ENCODE measurements at regions of chr3 and their contacts with region 1.

Region 1: DNA sequence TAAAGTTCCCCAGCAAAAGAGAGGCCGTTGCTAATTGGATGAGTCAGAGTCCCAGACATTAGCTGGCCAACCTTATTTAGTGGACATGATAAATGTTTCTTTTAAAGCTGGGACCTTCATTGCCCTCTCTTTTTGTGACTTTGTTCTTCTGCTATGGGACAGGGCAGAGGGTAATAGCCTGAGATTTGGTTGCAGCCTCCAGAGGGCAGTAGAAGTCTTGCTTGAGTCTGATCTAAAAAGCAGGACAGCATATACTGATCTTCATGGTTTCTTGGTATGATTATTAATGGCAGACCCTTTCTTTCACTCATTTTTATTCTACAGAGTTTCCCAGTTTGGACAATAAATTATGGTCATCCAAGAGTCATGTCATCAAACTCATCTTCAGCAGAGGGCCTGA is 25.1 kb upstream of the ZKSCAN7 start:
- DNase-seq: peak in 5 of 14 experiments; percentile 6 to 27 (median 19)
- ATAC-seq: no peak
- H3K4me3 ChIP-seq: no peak overlapping the region
- H3K4me3 Mint-ChIP-seq: no peak overlapping the region
- H3K27ac ChIP-seq: no peak overlapping the region
- H3K27ac Mint-ChIP-seq: no peak overlapping the region
- H3K4me1 ChIP-seq: no peaks in the 10 kb centered on the region
- H3K4me1 Mint-ChIP-seq: no peaks in the 10 kb centered on the region
- H3K27me3 ChIP-seq: peaks cover 4 to 10% of the 10 kb centered on the region in 2 experiments
- H3K27me3 Mint-ChIP-seq: peaks cover 36% of the 10 kb centered on the region
- CTCF ChIP-seq: no peak

Region 2: GRCh38 chr3:44467241-44467640 is 62.7 kb before region 1 on chr3:
- CTCF ChIA-PET with region 1: no interaction called
- POLR2A ChIA-PET with region 1: no interaction called
- intact Hi-C with region 1: no loop called
- DNase-seq: no peak
- ATAC-seq: no peak
- H3K4me3 ChIP-seq: no peak overlapping the region
- H3K4me3 Mint-ChIP-seq: no peak overlapping the region
- H3K27ac ChIP-seq: no peak overlapping the region
- H3K27ac Mint-ChIP-seq: peak overlapping the region; percentile 20
- H3K4me1 ChIP-seq: no peaks in the 10 kb centered on the region
- H3K4me1 Mint-ChIP-seq: peaks cover 26% of the 10 kb centered on the region
- H3K27me3 ChIP-seq: no peaks in the 10 kb centered on the region
- H3K27me3 Mint-ChIP-seq: no peaks in the 10 kb centered on the region
- CTCF ChIP-seq: no peak

Region 3: GRCh38 chr3:44913868-44914468 is 384.0 kb after region 1 on chr3:
- CTCF ChIA-PET with region 1: interaction called, 14 read pairs
- POLR2A ChIA-PET with region 1: no interaction called
- intact Hi-C with region 1: loop called (anchors 1 kb)
- DNase-seq: peak; percentile 46 to 80 (median 58)
- ATAC-seq: peak; percentile 64
- H3K4me3 ChIP-seq: no peak overlapping the region
- H3K4me3 Mint-ChIP-seq: no peak overlapping the region
- H3K27ac ChIP-seq: no peak overlapping the region
- H3K27ac Mint-ChIP-seq: no peak overlapping the region
- H3K4me1 ChIP-seq: no peaks in the 10 kb centered on the region
- H3K4me1 Mint-ChIP-seq: no peaks in the 10 kb centered on the region
- H3K27me3 ChIP-seq: peaks cover 8 to 11% of the 10 kb centered on the region in 2 experiments
- H3K27me3 Mint-ChIP-seq: peaks cover 23% of the 10 kb centered on the region
- CTCF ChIP-seq: peak; percentile 76

Region 4: DNA sequence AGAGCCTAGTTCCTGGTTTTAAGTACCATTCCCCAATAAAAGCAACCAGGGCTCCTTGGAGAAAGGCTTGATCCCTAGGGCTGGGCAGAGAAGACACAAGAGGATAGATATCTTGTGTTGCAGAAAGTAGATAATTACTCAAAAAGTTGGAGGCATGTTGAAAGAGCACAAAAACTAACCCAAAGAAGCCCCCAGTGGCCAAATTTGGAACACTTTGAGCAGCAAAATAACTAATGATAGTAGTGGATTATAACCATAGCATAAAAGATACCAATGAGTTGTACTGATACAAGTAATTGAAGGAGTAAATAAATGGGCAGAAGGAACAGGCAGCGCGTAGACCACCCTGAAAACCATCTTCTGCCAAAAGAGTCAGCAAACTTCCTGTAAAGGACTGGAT is 458.1 kb after region 1 on chr3:
- CTCF ChIA-PET with region 1: no interaction called
- POLR2A ChIA-PET with region 1: no interaction called
- intact Hi-C with region 1: loop called in 1 of 2 experiments (anchors 5 kb)
- DNase-seq: peak in 2 of 14 experiments; percentile 33 to 34
- ATAC-seq: peak; percentile 57
- H3K4me3 ChIP-seq: no peak overlapping the region
- H3K4me3 Mint-ChIP-seq: no peak overlapping the region
- H3K27ac ChIP-seq: no peak overlapping the region
- H3K27ac Mint-ChIP-seq: no peak overlapping the region
- H3K4me1 ChIP-seq: peaks cover 37% of the 10 kb centered on the region
- H3K4me1 Mint-ChIP-seq: peaks cover 65% of the 10 kb centered on the region
- H3K27me3 ChIP-seq: no peaks in the 10 kb centered on the region
- H3K27me3 Mint-ChIP-seq: no peaks in the 10 kb centered on the region
- CTCF ChIP-seq: peak; percentile 22

Region 5: DNA sequence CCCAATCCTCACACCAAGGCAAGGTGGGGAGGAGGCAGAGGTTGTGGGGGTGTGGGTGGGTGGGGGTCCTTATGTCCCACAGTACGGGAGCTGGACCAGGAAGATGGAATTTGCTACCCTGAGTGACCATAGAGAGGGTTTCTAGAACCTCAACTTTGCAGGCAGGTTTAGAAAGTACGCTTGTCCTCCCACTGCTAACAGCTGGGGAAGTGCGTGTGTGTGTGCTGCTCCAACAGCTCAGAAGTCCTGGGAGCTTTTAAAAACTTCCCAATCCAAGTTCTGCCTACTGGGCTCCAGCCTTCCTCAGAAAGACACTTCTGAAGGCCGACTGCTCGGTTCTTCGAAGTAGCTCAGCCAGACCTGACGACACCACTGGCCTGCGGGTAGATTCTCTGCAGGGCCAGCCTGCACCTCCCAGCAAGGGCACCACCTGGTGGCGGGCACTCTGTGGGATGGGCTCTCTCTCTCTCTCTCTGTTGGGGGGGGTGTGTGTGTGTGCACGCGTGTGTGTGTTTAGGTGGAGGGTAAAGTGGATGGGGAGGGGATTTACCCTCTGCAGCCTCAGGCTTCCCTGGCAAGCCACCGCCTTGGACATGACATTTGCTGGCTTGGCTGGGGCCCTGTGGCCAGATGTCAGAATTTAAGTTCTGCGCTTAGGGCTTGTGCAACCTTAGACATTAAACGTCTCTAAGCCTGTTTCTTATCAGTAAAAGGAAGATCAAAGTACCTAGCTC is 680.5 kb after region 1 on chr3:
- CTCF ChIA-PET with region 1: no interaction called
- POLR2A ChIA-PET with region 1: no interaction called
- intact Hi-C with region 1: loop called in 1 of 2 experiments (anchors 10 kb)
- DNase-seq: peak; percentile 76 to 90 (median 81)
- ATAC-seq: peak; percentile 98
- H3K4me3 ChIP-seq: no peak overlapping the region
- H3K4me3 Mint-ChIP-seq: no peak overlapping the region
- H3K27ac ChIP-seq: no peak overlapping the region
- H3K27ac Mint-ChIP-seq: no peak overlapping the region
- H3K4me1 ChIP-seq: peaks cover 17% of the 10 kb centered on the region
- H3K4me1 Mint-ChIP-seq: peaks cover 25% of the 10 kb centered on the region
- H3K27me3 ChIP-seq: peaks cover 4 to 10% of the 10 kb centered on the region in 2 experiments
- H3K27me3 Mint-ChIP-seq: peaks cover 5% of the 10 kb centered on the region
- CTCF ChIP-seq: peak; percentile 85

Region 6: GRCh38 chr3:45499529-45499928 is 969.6 kb after region 1 on chr3:
- CTCF ChIA-PET with region 1: no interaction called
- POLR2A ChIA-PET with region 1: no interaction called
- intact Hi-C with region 1: loop called in 1 of 2 experiments (anchors 2 kb)
- DNase-seq: peak in 2 of 14 experiments; percentile 19 to 29
- ATAC-seq: no peak
- H3K4me3 ChIP-seq: no peak overlapping the region
- H3K4me3 Mint-ChIP-seq: no peak overlapping the region
- H3K27ac ChIP-seq: no peak overlapping the region
- H3K27ac Mint-ChIP-seq: no peak overlapping the region
- H3K4me1 ChIP-seq: peaks cover 17% of the 10 kb centered on the region
- H3K4me1 Mint-ChIP-seq: peaks cover 24% of the 10 kb centered on the region
- H3K27me3 ChIP-seq: no peaks in the 10 kb centered on the region
- H3K27me3 Mint-ChIP-seq: no peaks in the 10 kb centered on the region
- CTCF ChIP-seq: peak; percentile 31